ENCODE measurements at regions of chr22 and their contacts with region 1.

Region 1: GRCh38 chr22:26589845-26590736 is at the start of gene TPST2:
- DNase-seq: peak; percentile 87
- ATAC-seq: peak; percentile 84
- H3K4me3 Mint-ChIP-seq: peak within 1 kb of the TSS; percentile 90
- H3K27ac Mint-ChIP-seq: peak within 1 kb of the TSS; percentile 86
- H3K4me1 Mint-ChIP-seq: peaks cover 47% of the 10 kb centered on the region
- H3K27me3 Mint-ChIP-seq: no peaks in the 10 kb centered on the region
- total RNA-seq, gene TPST2: 17.4 to 18.3 TPM

Region 2: GRCh38 chr22:26511857-26512793 is 78.0 kb before region 1 on chr22 and contains the start of gene TFIP11:
- CTCF ChIA-PET with region 1: no interaction called
- POLR2A ChIA-PET with region 1: no interaction called
- intact Hi-C with region 1: loop called in 1 of 2 experiments (anchors 1 kb)
- DNase-seq: peak; percentile 97
- ATAC-seq: peak; percentile 98
- H3K4me3 Mint-ChIP-seq: peak within 1 kb of the TSS; percentile 95
- H3K27ac Mint-ChIP-seq: peak within 1 kb of the TSS; percentile 95
- H3K4me1 Mint-ChIP-seq: peaks cover 27% of the 10 kb centered on the region
- H3K27me3 Mint-ChIP-seq: no peaks in the 10 kb centered on the region
- total RNA-seq, gene TFIP11: 36.5 to 41.7 TPM

Region 3: DNA sequence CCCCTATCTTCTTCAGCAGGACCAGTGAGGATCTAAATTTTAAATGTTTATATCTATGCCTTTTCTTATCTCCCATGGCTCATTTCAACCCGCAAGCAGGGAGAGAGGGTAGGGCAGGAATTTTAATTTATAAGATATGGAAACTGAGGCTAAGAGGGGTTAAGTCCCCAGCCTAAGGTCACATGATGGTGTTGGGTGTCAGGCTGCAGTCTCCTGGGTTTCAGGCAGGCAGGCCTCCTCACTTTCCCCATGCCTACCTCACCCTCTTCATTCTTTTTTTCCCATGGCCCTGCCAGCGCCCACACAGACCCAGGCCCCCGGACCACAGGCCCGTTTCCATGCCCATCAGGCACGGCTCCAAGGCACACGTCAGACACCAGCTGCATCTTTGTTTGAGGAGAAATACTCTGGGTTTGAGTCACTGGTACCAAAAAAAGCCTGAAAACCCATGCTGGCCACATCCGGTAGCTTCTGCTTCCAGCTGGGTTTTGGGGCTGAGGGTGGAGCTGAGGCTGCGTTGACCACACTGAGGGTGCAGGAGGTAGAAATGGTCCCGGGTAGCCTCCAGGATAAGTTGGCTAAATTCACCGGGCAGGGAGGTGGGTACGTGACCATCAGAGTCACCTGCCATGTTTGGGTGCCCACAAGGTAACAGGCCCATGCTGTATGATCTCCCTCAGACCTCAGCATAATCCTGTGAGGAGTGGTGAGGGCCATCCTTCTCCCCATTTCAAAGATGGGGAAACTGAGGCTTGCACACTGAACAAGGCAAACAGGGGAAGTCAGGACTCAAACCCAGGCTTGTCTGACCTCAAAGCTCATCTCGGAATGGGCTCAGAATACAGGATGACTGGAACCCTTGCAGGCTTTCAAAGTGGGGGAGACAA is 20.2 kb after region 1 on chr22:
- CTCF ChIA-PET with region 1: no interaction called
- POLR2A ChIA-PET with region 1: interaction called, 4 read pairs
- intact Hi-C with region 1: loop called in 1 of 2 experiments (anchors 1 kb)
- DNase-seq: peak; percentile 69
- ATAC-seq: peak; percentile 77
- H3K4me3 Mint-ChIP-seq: no peak overlapping the region
- H3K27ac Mint-ChIP-seq: peak overlapping the region; percentile 49
- H3K4me1 Mint-ChIP-seq: peaks cover 18% of the 10 kb centered on the region
- H3K27me3 Mint-ChIP-seq: peaks cover 2% of the 10 kb centered on the region

Region 4: DNA sequence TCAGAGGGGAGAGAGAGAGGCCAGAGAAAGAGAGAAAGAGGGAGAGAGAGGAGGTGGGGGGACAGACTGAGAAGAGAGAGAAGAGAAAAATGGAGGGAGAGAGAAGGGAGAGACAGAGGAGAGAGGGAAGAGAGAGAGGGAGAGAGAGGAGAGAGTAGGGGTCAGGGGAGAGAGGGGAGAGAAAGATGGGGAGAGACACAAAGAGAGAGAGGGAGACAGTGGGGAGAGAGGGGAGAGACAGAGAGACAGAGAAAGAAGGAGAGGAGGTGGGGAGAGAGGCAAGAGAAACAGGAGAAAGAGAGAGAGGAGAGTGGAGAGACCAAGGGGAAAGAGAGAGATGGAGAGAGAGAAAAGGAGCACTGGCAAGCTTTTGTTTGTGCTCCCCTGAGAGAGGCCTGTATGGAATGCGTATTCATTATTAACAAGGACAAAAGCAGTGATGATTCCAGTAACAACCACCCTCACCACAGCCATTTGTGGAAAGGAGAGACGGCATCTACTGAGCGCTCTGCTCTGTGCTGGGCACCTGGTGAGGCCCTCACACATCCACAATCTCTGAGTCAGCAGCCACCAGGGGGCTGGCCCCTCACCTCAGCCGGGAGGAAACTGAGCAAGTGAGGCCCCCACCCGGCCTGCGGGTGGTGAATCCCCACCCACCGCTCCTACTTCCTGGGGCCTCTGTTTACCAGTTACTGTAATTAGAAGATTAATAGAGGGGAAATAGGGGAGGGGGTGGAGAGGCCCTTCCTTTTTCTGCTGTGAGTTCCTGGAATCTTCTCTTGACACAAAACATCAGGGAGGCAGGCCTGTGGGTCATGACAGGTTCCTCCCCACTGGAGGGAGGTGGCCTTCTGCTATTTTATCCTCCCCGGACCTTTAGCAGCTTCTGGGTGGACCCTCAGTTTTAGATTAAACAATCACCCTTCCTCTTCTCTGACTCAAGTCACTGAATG is 52.6 kb after region 1 on chr22:
- CTCF ChIA-PET with region 1: interaction called, 4 read pairs
- POLR2A ChIA-PET with region 1: interaction called, 3 read pairs
- intact Hi-C with region 1: loop called in 1 of 2 experiments (anchors 2 kb)
- DNase-seq: peak; percentile 91
- ATAC-seq: peak; percentile 88
- H3K4me3 Mint-ChIP-seq: peak overlapping the region; percentile 61
- H3K27ac Mint-ChIP-seq: peak overlapping the region; percentile 91
- H3K4me1 Mint-ChIP-seq: peaks cover 62% of the 10 kb centered on the region
- H3K27me3 Mint-ChIP-seq: peaks cover 6% of the 10 kb centered on the region

Region 5: GRCh38 chr22:26658671-26659478 is 68.8 kb after region 1 on chr22:
- CTCF ChIA-PET with region 1: interaction called, 3 read pairs
- POLR2A ChIA-PET with region 1: no interaction called
- intact Hi-C with region 1: loop called (anchors 1 to 5 kb)
- DNase-seq: peak; percentile 92
- ATAC-seq: peak; percentile 88
- H3K4me3 Mint-ChIP-seq: peak overlapping the region; percentile 81
- H3K27ac Mint-ChIP-seq: peak overlapping the region; percentile 82
- H3K4me1 Mint-ChIP-seq: peaks cover 23% of the 10 kb centered on the region
- H3K27me3 Mint-ChIP-seq: peaks cover 8% of the 10 kb centered on the region

Measured in activated CD4-positive, alpha-beta T cell treated with anti-CD3 and anti-CD28 coated beads for 36 hours (primary cell).